Heart right ventricle (tissue), 16 donors: ENCODE measurements at regions of chr6 and their contacts with region 1.

Region 1: DNA sequence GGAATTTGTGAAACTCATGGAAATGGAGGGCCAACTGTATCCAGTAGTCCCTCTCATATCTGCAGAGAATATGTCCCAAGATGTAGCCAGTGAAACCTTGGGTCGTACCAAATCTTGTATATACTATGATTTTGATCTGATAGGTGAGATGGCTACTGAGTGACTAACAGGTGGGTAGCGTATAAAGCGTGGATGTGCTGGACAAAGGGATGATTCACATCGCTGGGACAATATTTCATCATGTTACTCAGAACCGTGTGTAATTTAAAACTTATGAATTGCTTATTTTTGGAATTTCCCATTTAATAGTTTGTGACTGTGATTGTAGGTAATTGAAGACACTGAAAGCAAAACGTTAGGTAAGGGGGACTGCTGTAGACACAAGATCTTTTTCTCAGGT is 144.1 kb downstream of the SMAP1 start:
- DNase-seq: no peak
- ATAC-seq: no peak
- H3K4me3 ChIP-seq: no peak overlapping the region
- H3K27ac ChIP-seq: no peak overlapping the region
- H3K4me1 ChIP-seq: peaks cover 0 to 28% (median 0%) of the 10 kb centered on the region in 9 donors
- H3K27me3 ChIP-seq: no peaks in the 10 kb centered on the region
- CTCF ChIP-seq: no peak

Region 2: DNA sequence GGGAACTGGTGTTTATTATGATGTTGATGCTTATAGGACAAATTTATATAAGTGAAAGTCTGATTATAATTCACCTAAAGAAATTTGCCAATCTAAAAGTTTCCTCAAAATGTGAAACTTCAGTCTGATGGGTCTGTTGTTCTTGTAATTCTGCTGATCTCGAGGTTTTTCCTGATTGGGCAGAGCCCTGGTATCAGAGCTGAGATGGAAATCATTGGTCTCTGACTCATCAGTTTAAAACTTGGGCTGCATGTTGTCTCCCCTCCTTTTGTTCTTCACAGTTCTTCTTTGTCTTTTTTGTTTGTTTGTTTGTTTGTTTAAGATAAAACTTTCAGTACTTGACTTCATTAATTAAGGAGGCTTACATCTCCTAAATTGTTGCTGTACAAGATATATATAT is 138.2 kb before region 1 on chr6:
- intact Hi-C with region 1: no loop called
- DNase-seq: no peak
- ATAC-seq: no peak
- H3K4me3 ChIP-seq: no peak overlapping the region
- H3K27ac ChIP-seq: peak overlapping the region in 3 of 10 donors; percentile 19 to 62 (median 46)
- H3K4me1 ChIP-seq: peaks cover 0 to 56% (median 40%) of the 10 kb centered on the region in 9 donors
- H3K27me3 ChIP-seq: no peaks in the 10 kb centered on the region
- CTCF ChIP-seq: no peak

Region 3: GRCh38 chr6:70846207-70846835 is 34.5 kb after region 1 on chr6:
- intact Hi-C with region 1: loop called in 1 of 10 experiments (anchors 5 kb)
- DNase-seq: no peak
- ATAC-seq: peak in 1 of 8 donors; percentile 30
- H3K4me3 ChIP-seq: no peak overlapping the region
- H3K27ac ChIP-seq: no peak overlapping the region
- H3K4me1 ChIP-seq: no peaks in the 10 kb centered on the region
- H3K27me3 ChIP-seq: no peaks in the 10 kb centered on the region
- CTCF ChIP-seq: no peak

Region 4: GRCh38 chr6:71364889-71365552 is 553.2 kb after region 1 on chr6:
- intact Hi-C with region 1: no loop called
- DNase-seq: no peak
- ATAC-seq: peak in 5 of 8 donors; percentile 25 to 81 (median 73)
- H3K4me3 ChIP-seq: no peak overlapping the region
- H3K27ac ChIP-seq: peak overlapping the region in 2 of 10 donors; percentile 12 to 28
- H3K4me1 ChIP-seq: peaks cover 4 to 50% (median 40%) of the 10 kb centered on the region in 9 donors
- H3K27me3 ChIP-seq: no peaks in the 10 kb centered on the region
- CTCF ChIP-seq: no peak